ENCODE measurements at regions of chr12 and their contacts with region 1.

Region 1: DNA sequence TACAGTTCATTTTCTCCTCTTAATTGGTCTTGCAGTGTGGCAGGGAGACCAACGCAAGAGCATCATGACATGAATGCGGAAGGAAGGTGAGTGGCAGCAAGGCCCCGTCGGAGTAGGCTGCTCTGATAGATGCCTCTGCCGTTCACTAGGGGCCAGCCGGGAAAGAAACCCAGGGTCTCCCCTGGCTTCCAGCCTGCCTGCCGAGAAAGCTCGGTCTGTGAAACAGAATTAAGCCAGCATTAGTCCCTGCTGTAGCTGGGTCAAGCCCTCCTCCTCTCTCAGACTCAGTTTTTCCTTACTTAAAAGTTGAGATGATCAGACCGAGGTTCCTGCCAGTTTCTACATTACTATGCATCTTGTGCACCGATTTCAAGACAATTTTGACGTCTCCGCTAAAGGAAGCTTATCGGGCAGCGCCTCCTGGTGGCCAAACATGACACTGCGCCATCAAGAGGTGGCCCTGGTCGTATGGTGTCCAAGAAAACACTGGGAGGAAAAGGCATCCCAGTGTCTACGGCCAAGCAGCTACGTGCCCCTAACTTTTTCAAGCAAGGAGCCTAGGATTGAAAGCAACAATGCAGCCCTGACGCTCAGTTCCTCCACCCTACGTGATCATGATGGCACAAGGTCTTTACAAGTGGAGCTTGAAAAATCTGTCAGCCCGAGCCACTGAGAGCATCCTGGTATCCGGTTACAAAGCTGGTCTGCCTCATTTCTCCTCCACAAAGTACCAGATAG is 131.6 kb downstream of the KSR2 start:
- DNase-seq: peak; percentile 60
- ATAC-seq: peak; percentile 90
- H3K4me3 ChIP-seq: no peak overlapping the region
- H3K27ac ChIP-seq: no peak overlapping the region
- H3K4me1 ChIP-seq: no peaks in the 10 kb centered on the region
- H3K27me3 ChIP-seq: no peaks in the 10 kb centered on the region
- CTCF ChIP-seq: peak; percentile 86
- POLR2A ChIP-seq: no peak
- RAD21 ChIP-seq: peak; percentile 85

Region 2: DNA sequence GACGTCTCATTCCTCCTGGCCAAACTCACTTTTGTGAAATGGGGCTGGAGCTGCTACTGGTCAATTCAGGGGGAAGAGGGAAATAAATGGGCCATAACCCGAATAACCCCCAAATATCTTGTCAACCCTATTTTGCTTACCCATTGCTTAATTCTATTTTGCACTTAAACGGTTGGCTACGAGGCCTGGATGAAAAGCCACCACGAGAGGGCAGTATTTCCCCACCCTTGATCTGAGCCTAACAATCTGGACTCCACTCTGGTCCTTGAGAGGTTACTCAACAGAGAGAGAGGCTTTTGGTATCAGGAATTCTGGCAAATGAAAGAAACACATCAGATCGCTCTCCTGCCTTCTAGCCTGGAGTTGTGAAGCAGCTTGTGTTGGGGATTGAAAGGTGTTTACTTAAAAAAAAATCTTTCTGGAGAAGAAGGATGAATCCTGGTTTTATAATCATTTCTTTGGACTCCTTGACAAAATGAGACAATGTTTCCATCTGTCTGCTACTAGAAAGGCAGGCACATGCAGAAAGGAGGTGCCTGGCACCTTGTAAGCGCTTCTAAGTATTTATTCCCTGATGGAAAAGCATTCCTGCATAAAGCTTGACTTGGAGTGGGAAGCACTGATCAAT is 624.5 kb before region 1 on chr12:
- CTCF ChIA-PET with region 1: interaction called, 8 read pairs
- POLR2A ChIA-PET with region 1: no interaction called
- dilution Hi-C with region 1: no loop called
- in situ Hi-C with region 1: loop called (anchors 5 kb)
- intact Hi-C with region 1: loop called (anchors 1 kb)
- DNase-seq: peak; percentile 71
- ATAC-seq: peak; percentile 97
- H3K4me3 ChIP-seq: no peak overlapping the region
- H3K27ac ChIP-seq: no peak overlapping the region
- H3K4me1 ChIP-seq: no peaks in the 10 kb centered on the region
- H3K27me3 ChIP-seq: peaks cover 7% of the 10 kb centered on the region; the same call in 1 of the 2 replicates
- CTCF ChIP-seq: peak; percentile 92
- POLR2A ChIP-seq: no peak
- RAD21 ChIP-seq: peak; percentile 79

Region 3: DNA sequence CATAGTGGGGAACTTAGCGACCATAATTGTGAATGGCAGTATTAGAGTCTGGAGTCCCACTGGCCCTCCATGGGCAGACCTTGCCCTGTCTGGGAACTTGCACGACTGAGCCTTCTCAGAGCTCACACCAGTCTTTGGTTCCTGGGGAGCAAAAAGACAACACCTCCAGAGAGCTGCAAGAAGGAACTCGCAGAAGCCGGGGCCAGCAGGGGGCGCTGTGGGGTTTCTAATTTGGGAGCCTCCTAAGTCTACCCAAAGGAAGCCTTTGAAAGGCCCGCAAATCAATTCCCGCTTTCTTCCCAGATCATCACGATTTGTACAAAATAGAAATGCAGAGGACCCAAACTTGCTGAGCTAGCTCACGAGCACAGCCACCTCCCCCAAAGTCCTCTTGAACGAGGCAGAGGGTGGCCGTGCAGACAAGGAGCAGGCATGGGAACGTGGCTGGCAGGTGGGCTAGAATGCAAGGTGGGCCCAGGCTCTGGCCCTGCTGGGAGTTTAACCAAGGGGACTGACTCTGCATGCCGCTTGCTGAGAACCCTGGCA is 600.6 kb before region 1 on chr12:
- CTCF ChIA-PET with region 1: interaction called, 3 read pairs
- POLR2A ChIA-PET with region 1: no interaction called
- dilution Hi-C with region 1: no loop called
- in situ Hi-C with region 1: no loop called
- intact Hi-C with region 1: loop called (anchors 1 kb)
- DNase-seq: peak; percentile 17
- ATAC-seq: no peak; the same call in 1 of the 2 replicates
- H3K4me3 ChIP-seq: no peak overlapping the region
- H3K27ac ChIP-seq: no peak overlapping the region
- H3K4me1 ChIP-seq: no peaks in the 10 kb centered on the region
- H3K27me3 ChIP-seq: no peaks in the 10 kb centered on the region
- CTCF ChIP-seq: peak; percentile 49
- POLR2A ChIP-seq: no peak
- RAD21 ChIP-seq: peak; percentile 27; the same call in 1 of the 2 replicates

Region 4: DNA sequence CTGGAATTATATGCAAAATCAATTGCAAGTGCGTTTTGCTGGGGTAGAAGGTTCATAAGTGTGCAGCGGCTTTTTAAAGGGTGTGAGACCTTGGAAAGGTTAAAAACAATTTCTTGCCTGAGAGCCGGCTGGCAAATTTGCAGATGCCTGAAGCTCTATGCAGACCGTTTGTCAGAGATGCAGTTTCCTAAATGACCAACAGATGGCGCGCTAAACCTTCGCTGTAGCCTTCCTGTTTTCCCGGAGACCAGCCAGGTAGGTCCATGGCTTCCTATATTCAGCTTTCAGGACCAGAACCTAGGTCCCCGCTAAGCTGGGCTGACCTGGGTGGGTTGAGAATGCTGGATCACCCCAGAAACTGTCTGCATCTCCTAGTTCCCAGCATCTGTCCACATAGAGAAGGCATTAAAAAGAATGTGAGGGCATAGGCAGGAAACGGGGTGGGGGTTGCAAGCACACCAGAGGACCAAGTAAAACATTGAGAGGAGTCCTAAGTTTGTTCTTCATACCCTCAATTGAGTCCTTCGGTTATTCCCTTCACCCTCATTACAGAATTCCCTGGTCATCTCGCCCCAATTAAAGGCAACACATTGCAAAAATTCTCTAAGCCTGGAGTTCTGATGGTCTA is 470.0 kb before region 1 on chr12:
- CTCF ChIA-PET with region 1: interaction called, 31 read pairs
- POLR2A ChIA-PET with region 1: no interaction called
- dilution Hi-C with region 1: no loop called
- in situ Hi-C with region 1: loop called (anchors 10 kb)
- intact Hi-C with region 1: loop called (anchors 1 kb)
- DNase-seq: peak; percentile 53
- ATAC-seq: peak; percentile 72
- H3K4me3 ChIP-seq: no peak overlapping the region
- H3K27ac ChIP-seq: no peak overlapping the region
- H3K4me1 ChIP-seq: no peaks in the 10 kb centered on the region
- H3K27me3 ChIP-seq: no peaks in the 10 kb centered on the region
- CTCF ChIP-seq: peak; percentile 69
- POLR2A ChIP-seq: no peak
- RAD21 ChIP-seq: peak; percentile 69

Region 5: GRCh38 chr12:117507552-117507951 is 329.6 kb before region 1 on chr12:
- CTCF ChIA-PET with region 1: no interaction called
- POLR2A ChIA-PET with region 1: no interaction called
- dilution Hi-C with region 1: no loop called
- in situ Hi-C with region 1: no loop called
- intact Hi-C with region 1: no loop called
- DNase-seq: no peak
- ATAC-seq: no peak
- H3K4me3 ChIP-seq: no peak overlapping the region
- H3K27ac ChIP-seq: no peak overlapping the region
- H3K4me1 ChIP-seq: no peaks in the 10 kb centered on the region
- H3K27me3 ChIP-seq: no peaks in the 10 kb centered on the region
- CTCF ChIP-seq: no peak
- POLR2A ChIP-seq: no peak
- RAD21 ChIP-seq: no peak

Measured in IMR-90 (cell line).